ENCODE measurements at regions of chr11 and their contacts with region 1.

Region 1: DNA sequence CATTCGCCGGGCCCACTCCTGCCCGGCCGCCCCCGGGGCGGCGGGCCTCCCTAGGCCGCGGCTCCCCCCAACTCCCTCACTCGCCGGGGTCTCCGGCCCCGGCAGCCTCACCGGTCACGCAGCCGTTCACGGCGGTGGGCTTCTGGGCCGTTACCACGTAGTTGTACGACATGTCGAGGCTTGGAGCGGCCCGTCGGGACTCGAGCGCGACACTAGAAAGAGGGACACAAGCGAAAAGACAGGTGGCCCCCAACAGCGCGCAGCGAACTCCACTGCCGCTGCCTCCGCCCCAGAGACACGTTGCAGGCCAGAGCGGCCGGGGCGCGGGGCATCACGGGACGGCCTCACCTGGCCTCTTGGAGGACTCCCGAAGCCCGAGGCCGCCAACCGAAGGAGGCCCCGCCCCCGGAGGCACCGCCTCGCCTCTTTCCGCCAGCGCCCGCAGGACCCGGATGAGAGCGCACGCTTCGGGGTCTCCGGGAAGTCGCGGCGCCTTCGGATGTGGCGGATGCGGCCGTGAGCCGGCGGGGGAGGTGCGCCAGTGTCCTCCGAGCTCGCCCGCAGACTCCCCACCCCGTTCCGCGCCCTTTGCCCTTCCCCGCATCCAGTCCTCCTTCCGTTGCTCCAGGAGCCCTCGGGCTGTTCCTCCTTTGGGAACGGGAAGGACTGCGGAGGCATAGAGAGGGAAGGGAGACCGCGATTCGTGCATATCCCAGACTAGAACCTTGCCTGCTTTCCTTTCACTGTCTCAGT is at the starts of genes DDB1 and TKFC:
- DNase-seq: peak; percentile 97

Region 2: DNA sequence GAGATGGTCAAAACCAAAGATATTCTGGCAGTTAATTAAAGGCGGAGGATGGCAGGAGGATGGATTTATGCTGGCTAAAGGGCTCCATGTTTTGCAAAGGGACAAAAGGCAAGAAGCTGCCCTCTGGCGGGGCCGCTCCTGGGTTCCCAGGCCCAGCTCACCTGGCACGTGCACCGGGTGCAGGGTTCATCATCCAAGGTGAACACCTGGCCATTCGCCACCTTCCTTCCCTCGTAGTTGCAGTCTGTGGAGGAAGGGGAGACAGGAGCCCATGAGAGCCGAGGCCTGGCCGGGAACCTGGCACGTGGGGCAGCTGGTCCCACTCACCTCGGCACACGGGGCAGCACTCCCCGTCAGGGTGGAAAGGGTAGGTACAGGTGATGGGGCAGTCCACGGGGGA is 68.2 kb before region 1 on chr11:
- CTCF ChIA-PET with region 1: no interaction called
- POLR2A ChIA-PET with region 1: no interaction called
- DNase-seq: no peak

Region 3: DNA sequence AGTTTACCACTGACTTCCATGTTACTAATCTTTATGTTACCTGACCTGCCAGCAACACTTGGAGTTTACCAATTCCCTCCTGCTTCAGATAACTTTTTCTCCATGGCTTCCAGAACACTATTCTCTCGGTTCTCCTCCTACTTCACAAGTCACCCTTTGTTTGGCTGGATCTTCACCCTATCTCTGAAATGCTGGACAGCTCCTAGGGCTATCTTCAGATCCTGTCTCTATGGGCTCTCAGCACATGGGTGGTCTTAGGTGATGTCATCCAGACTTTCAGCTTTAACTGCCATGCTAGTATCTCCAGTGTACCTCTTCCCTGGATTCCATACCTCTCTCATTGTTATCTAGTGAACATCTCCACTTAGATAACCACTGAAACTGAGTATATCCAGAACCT is 25.6 kb before region 1 on chr11:
- CTCF ChIA-PET with region 1: no interaction called
- POLR2A ChIA-PET with region 1: no interaction called
- DNase-seq: no peak

Region 4: DNA sequence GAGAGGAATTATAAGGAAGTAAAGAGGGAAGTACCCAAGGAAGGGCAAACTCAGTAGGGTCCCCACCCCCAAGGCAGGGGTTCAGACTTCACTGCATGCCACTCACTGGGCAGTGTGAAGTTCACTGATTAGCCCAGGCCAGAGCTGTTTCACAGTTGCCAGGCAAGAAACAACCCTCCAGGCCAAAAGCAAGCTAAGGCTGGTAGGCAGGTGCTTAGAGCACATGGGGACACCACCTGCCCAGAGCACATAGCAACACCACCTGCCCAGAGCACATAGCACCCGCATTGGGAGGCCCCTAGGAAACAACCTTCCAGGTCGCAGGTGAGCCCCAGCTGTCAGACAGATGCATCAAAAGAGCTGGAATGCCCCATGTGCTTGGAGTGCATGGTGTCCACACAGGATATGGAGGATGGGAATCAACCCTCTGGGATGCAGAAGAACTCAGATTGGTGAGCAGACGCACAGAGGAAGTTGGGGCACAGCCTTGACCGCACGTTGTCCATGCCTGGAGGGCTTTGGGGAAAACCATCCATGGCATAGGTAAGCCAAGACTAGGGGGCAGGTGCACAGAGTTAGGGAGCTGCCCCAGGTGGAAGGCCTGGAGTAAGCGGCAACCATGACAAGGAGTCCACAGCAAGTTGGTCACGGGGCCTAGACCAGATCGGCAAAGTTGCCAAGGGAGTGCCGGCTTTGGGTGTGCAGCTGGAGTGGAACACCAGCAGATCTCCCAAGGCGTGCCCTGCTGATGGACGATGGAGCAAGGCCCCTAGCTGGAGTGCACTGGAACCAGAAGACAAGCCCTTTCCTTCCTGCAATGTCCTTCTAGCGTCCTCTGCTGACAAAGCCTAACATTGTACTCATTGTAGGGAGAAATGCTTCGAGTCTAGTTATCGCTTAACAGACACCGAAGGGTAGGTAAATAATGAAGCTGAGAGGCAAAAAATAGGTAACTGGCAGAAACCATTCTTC is 51.6 kb after region 1 on chr11:
- CTCF ChIA-PET with region 1: interaction called, 77 read pairs
- POLR2A ChIA-PET with region 1: interaction called, 24 read pairs
- DNase-seq: peak; percentile 30

Region 5: GRCh38 chr11:61392981-61393595 is 60.1 kb after region 1 on chr11:
- CTCF ChIA-PET with region 1: interaction called, 16 read pairs
- POLR2A ChIA-PET with region 1: interaction called, 18 read pairs
- DNase-seq: peak; percentile 42

Region 6: DNA sequence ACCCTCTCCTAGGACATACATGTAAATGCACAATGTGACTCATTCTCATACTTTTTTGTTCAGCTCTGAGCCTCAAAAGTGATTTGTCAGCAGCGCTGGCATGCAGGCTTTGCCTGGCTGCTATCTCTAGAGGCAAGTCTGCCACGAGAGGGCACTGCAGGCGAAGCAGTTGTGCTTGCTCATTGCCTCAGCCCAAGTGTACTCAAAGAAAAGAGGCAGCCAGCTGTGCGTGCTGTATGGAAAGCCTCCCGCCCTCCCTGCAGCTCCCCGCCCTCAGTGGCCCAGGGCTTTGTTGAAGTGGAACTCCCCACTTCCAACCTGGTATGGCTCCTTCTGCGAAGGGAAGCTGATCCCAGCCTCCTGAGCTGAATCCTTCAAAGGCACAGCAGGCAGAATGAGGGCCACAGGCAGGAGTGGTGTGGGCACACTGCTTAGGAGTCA is 113.3 kb after region 1 on chr11:
- CTCF ChIA-PET with region 1: no interaction called
- POLR2A ChIA-PET with region 1: no interaction called
- DNase-seq: peak; percentile 85

Region 7: DNA sequence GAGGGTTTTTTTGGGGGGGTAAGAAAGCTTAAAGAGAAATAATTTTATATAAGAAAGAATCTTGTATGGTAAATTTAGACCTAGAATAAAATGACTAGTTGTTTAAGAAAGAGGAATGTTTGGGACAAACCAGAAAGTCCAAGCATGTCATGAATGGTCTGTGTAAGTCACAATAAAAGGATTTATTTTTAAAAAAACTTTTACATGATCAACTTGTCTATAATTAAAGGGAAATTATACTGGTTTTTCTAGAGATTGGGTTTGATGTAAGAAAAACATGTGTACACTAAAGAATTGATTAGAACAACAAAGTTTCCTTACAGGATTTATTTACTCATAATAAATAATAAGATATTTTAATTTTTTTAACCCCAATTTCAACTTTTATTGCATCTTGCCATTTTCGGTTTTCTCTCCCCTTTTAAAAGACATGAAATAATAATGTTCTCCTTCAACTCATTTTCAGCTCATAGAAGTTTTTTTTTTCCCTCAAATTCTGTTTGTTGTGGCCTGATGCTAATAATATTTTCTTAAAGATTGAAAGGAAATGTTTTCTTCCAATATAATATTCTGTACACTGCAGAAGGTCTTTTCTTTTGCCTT is 755.5 kb after region 1 on chr11:
- CTCF ChIA-PET with region 1: no interaction called
- POLR2A ChIA-PET with region 1: no interaction called
- DNase-seq: no peak